K562 (cell line): ENCODE measurements at regions of chr19 and their contacts with region 1.

Region 1: GRCh38 chr19:33125929-33126388 is 6.0 kb upstream of the WDR88 start:
- DNase-seq: peak; percentile 71 to 75 (median 72)
- ATAC-seq: peak; percentile 90
- H3K4me3 ChIP-seq: no peak overlapping the region
- H3K27ac ChIP-seq: no peak overlapping the region
- H3K4me1 ChIP-seq: peaks cover 10 to 20% of the 10 kb centered on the region in 2 experiments; a peak in 3 of 5 replicates
- H3K27me3 ChIP-seq: no peaks in the 10 kb centered on the region
- CTCF ChIP-seq: peak; percentile 81 to 86 (median 85)
- EP300 ChIP-seq: no peak
- POLR2A ChIP-seq: no peak
- RAD21 ChIP-seq: peak; percentile 52 to 75

Region 2: DNA sequence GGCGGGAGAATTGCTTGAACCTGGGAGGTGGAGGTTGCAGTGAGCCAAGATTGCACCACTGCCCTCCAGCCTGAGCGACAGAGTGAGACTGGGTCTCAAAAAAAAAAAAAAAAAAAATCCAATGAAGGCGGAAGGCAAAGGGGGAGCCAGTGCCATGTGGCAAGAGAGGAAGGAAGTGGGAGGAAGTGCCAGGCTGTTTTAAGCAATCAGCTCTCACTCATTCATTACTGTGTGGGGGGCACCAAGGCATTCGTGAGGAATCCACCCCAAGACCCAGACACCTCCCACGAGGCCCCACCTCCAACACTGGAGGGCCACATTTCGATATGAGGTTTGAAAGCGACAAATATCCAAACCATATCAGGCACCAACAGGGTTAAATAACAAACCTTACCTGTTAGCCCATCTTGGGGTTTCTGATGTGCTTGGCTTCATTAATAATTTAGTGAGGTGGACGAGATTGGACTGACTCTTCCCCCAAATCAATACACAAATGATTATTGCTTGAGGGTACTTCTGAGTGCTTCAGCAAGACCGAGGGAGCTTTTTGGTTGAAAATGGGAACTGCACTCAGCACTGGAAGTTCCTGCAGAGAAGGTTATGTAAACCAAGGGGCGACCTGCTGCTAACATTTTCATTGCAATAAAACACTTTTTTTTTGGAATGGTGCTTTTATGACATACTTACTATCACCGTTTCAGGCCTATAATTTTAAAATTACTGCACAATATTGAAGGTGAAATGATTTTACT is 60.6 kb after region 1 on chr19:
- CTCF ChIA-PET with region 1: interaction called, 5 read pairs
- POLR2A ChIA-PET with region 1: interaction called, 6 read pairs
- in situ Hi-C with region 1: no loop called
- intact Hi-C with region 1: loop called (anchors 10 kb)
- DNase-seq: no peak
- ATAC-seq: no peak
- H3K4me3 ChIP-seq: no peak overlapping the region
- H3K27ac ChIP-seq: no peak overlapping the region
- H3K4me1 ChIP-seq: no peaks in the 10 kb centered on the region; a peak in 1 of 5 replicates
- H3K27me3 ChIP-seq: peaks cover 6 to 20% of the 10 kb centered on the region in 2 experiments; a peak in 4 of 5 replicates
- CTCF ChIP-seq: no peak
- EP300 ChIP-seq: no peak
- POLR2A ChIP-seq: no peak
- RAD21 ChIP-seq: no peak